Posterior vena cava (tissue), 2 donors: ENCODE measurements at regions of chr10 and their contacts with region 1.

Region 1: DNA sequence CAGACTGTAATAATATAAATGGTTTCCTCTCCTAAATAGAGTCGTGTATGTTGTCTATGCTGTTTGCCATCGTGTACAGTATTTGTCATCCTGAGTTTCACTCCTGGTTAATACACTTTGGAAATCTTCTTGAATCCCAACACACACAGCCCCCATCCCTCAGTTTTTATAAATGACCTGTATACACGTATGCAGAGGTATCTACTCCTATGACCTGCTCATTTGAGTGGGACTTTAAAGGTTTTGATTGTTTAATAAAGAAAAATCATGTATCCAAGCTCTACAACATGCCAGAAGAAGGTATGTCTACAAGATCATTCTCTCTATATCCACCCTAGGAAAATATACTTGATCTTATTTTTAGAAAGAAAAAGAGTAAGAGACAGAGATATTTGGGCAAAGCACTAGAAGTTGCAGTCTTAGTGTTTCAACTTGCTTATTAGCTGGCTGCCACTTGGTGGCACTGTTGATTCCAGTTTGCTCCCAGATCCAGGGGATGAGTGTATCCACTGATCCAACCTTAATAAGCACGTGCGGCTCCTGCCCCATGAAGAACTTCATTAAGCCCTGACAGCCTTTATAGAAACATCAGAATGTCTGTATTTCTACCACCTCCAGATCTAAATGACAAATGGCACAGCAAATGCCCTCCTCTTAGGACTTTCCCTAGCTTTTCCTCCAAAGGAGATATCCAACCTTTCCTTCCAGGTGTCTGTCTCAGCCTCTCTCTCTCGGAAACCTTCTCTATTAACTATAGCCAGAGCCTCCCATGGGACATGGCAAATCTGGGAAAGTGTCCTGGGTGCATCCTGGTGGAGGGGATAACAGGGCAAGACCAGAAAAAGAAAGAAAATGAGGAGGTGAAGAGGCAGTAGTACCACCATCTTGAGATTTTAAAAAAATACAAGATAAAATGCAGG is 181.6 kb upstream of the NEBL start:
- DNase-seq: no peak

Region 2: GRCh38 chr10:20128811-20129210 is 949.9 kb before region 1 on chr10:
- intact Hi-C with region 1: no loop called
- DNase-seq: no peak

Region 3: GRCh38 chr10:21100871-21101514 is 22.3 kb after region 1 on chr10:
- intact Hi-C with region 1: no loop called
- DNase-seq: no peak

Region 4: GRCh38 chr10:21265621-21266020 is 187.0 kb after region 1 on chr10:
- intact Hi-C with region 1: loop called in 1 of 2 experiments (anchors 10 kb)
- DNase-seq: no peak